ENCODE measurements at regions of chr19 and their contacts with region 1.

Region 1: GRCh38 chr19:47391510-47392223 is 27.7 kb downstream of the MEIS3 start:
- DNase-seq: peak; percentile 62 to 83 (median 76)
- H3K4me3 ChIP-seq: no peak overlapping the region
- H3K4me3 Mint-ChIP-seq: no peak overlapping the region
- H3K27ac ChIP-seq: no peak overlapping the region
- H3K27ac Mint-ChIP-seq: peak overlapping the region in 1 of 8 donors; percentile 79
- H3K4me1 ChIP-seq: no peaks in the 10 kb centered on the region
- H3K4me1 Mint-ChIP-seq: peaks cover 4 to 6% (median 5%) of the 10 kb centered on the region in 3 donors
- H3K27me3 ChIP-seq: no peaks in the 10 kb centered on the region
- H3K27me3 Mint-ChIP-seq: peaks cover 1 to 15% of the 10 kb centered on the region in 2 donors

Region 2: GRCh38 chr19:47296036-47296435 is 95.6 kb before region 1 on chr19:
- CTCF ChIA-PET with region 1: interaction called, 89 read pairs
- POLR2A ChIA-PET with region 1: no interaction called
- DNase-seq: peak; percentile 61 to 83 (median 71)
- H3K4me3 ChIP-seq: no peak overlapping the region
- H3K4me3 Mint-ChIP-seq: no peak overlapping the region
- H3K27ac ChIP-seq: no peak overlapping the region
- H3K27ac Mint-ChIP-seq: peak overlapping the region in 2 of 8 donors; percentile 48 to 72
- H3K4me1 ChIP-seq: peaks cover 3% of the 10 kb centered on the region
- H3K4me1 Mint-ChIP-seq: peaks cover 7 to 14% (median 10%) of the 10 kb centered on the region in 3 donors
- H3K27me3 ChIP-seq: no peaks in the 10 kb centered on the region
- H3K27me3 Mint-ChIP-seq: no peaks in the 10 kb centered on the region

Region 3: GRCh38 chr19:47348819-47349795 is 42.6 kb before region 1 on chr19 and contains the start of gene DHX34:
- CTCF ChIA-PET with region 1: interaction called, 14 read pairs
- POLR2A ChIA-PET with region 1: interaction called, 4 read pairs
- DNase-seq: peak; percentile 98 to 100 (median 99)
- H3K4me3 ChIP-seq: peak within 1 kb of the TSS; percentile 92
- H3K4me3 Mint-ChIP-seq: peak within 1 kb of the TSS; percentile 91 to 98 (median 96)
- H3K27ac ChIP-seq: peak within 1 kb of the TSS; percentile 73
- H3K27ac Mint-ChIP-seq: peak within 1 kb of the TSS; percentile 81 to 98 (median 94)
- H3K4me1 ChIP-seq: peaks cover 22% of the 10 kb centered on the region
- H3K4me1 Mint-ChIP-seq: peaks cover 32 to 48% (median 33%) of the 10 kb centered on the region in 3 donors
- H3K27me3 ChIP-seq: no peaks in the 10 kb centered on the region
- H3K27me3 Mint-ChIP-seq: peaks cover 0 to 5% of the 10 kb centered on the region in 2 donors
- total RNA-seq, gene DHX34: 23.2 to 24.5 TPM

Region 4: GRCh38 chr19:47447470-47448359 is 56.0 kb after region 1 on chr19:
- CTCF ChIA-PET with region 1: no interaction called
- POLR2A ChIA-PET with region 1: no interaction called
- DNase-seq: peak in 4 of 5 donors; percentile 45 to 62 (median 52)
- H3K4me3 ChIP-seq: peak overlapping the region; percentile 14
- H3K4me3 Mint-ChIP-seq: peak overlapping the region in 4 of 7 donors; percentile 43 to 80 (median 56)
- H3K27ac ChIP-seq: peak overlapping the region; percentile 38
- H3K27ac Mint-ChIP-seq: no peak overlapping the region
- H3K4me1 ChIP-seq: peaks cover 45% of the 10 kb centered on the region
- H3K4me1 Mint-ChIP-seq: peaks cover 44 to 57% (median 54%) of the 10 kb centered on the region in 3 donors
- H3K27me3 ChIP-seq: peaks cover 28% of the 10 kb centered on the region
- H3K27me3 Mint-ChIP-seq: peaks cover 46 to 68% of the 10 kb centered on the region in 2 donors

Region 5: DNA sequence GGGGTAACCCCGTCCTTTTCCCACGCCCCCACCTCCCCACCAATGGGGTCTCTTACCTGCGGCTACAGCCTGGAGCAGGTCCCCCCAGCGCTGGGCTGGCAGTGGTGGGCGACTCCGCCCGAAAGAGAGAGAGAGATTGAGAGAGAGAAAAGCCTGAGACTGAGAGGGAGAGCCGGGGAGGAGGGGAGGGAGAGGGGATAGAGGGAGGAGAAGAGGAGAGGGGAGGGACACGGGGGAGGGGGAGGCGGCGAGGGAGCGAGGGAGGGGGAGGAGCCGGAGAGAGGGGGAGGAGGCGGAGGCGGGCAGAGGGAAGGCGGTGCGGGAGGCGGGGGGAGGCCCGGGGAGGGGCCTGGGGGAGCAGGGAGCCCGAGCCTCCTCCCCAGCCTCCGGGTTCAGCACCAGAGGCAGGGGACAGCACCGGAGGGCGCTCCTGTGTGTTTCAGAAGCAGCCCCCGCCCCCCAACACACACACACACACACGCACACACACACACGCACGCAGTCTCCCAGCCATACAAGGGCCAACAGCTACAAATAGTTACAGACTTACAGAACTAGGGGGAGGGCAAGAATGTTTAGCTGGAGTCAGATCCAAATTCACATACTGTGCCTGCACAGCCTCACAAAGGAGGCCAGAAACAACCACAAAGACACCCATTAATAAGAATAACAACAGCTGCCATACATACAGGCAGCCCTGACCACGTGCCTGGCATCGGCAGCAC is 80.2 kb after region 1 on chr19 and contains the start of gene SLC8A2:
- CTCF ChIA-PET with region 1: no interaction called
- POLR2A ChIA-PET with region 1: no interaction called
- DNase-seq: peak; percentile 45 to 77 (median 57)
- H3K4me3 ChIP-seq: no peak within 1 kb of the TSS
- H3K4me3 Mint-ChIP-seq: peak within 1 kb of the TSS; percentile 18 to 86 (median 27)
- H3K27ac ChIP-seq: no peak within 1 kb of the TSS
- H3K27ac Mint-ChIP-seq: peak within 1 kb of the TSS in 2 of 8 donors; percentile 1 to 9
- H3K4me1 ChIP-seq: peaks cover 6% of the 10 kb centered on the region
- H3K4me1 Mint-ChIP-seq: peaks cover 9 to 17% (median 15%) of the 10 kb centered on the region in 3 donors
- H3K27me3 ChIP-seq: peaks cover 30% of the 10 kb centered on the region
- H3K27me3 Mint-ChIP-seq: peaks cover 38 to 57% of the 10 kb centered on the region in 2 donors
- total RNA-seq, gene SLC8A2: not detected

Region 6: DNA sequence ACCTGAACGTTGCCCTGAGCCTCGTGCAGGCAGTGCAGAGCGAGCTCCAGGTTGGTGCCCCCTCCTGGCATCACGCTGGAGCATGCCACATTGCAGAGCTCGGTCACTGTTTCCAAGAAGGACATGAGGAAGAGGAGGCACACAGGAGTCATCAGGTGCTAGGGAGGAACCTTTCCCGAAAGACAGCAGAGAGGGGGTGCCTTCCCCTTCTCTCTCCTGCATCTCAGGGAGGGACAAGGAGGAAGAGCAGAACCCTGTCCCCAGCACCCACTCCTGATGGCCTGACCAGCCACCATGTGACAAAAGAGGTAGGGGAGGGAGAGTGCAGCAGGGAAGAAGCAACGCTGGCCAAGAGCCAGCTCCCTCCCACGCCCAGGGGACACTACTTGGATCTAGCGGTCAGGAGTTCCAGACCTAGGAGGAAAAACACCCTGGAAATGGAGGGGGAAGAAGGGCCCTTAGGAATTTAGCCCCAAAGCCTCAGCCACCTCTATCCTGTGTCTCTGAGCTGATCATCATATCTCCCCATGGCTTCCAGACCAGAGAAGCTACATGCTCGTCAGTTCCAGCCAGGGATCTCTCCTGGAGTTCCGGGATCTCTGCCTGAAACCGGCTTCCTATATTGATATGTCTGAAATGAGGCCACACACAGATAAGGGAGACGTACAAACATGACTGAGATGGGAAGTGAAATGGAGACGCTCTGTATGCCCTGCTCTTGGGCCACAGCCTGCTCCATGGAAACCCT is 140.1 kb after region 1 on chr19:
- CTCF ChIA-PET with region 1: no interaction called
- POLR2A ChIA-PET with region 1: no interaction called
- DNase-seq: no peak
- H3K4me3 ChIP-seq: no peak overlapping the region
- H3K4me3 Mint-ChIP-seq: no peak overlapping the region
- H3K27ac ChIP-seq: no peak overlapping the region
- H3K27ac Mint-ChIP-seq: peak overlapping the region in 1 of 8 donors; percentile 23
- H3K4me1 ChIP-seq: no peaks in the 10 kb centered on the region
- H3K4me1 Mint-ChIP-seq: no peaks in the 10 kb centered on the region
- H3K27me3 ChIP-seq: no peaks in the 10 kb centered on the region
- H3K27me3 Mint-ChIP-seq: peaks cover 2 to 3% of the 10 kb centered on the region in 2 donors

Region 7: GRCh38 chr19:47631681-47632378 is 240.2 kb after region 1 on chr19:
- CTCF ChIA-PET with region 1: no interaction called
- POLR2A ChIA-PET with region 1: interaction called, 12 read pairs
- DNase-seq: no peak
- H3K4me3 ChIP-seq: no peak overlapping the region
- H3K4me3 Mint-ChIP-seq: peak overlapping the region in 1 of 7 donors; percentile 9
- H3K27ac ChIP-seq: no peak overlapping the region
- H3K27ac Mint-ChIP-seq: no peak overlapping the region
- H3K4me1 ChIP-seq: no peaks in the 10 kb centered on the region
- H3K4me1 Mint-ChIP-seq: peaks cover 37 to 73% (median 41%) of the 10 kb centered on the region in 3 donors
- H3K27me3 ChIP-seq: no peaks in the 10 kb centered on the region
- H3K27me3 Mint-ChIP-seq: peaks cover 0 to 1% of the 10 kb centered on the region in 2 donors